ENCODE measurements at regions of chr2 and their contacts with region 1.

Region 1: DNA sequence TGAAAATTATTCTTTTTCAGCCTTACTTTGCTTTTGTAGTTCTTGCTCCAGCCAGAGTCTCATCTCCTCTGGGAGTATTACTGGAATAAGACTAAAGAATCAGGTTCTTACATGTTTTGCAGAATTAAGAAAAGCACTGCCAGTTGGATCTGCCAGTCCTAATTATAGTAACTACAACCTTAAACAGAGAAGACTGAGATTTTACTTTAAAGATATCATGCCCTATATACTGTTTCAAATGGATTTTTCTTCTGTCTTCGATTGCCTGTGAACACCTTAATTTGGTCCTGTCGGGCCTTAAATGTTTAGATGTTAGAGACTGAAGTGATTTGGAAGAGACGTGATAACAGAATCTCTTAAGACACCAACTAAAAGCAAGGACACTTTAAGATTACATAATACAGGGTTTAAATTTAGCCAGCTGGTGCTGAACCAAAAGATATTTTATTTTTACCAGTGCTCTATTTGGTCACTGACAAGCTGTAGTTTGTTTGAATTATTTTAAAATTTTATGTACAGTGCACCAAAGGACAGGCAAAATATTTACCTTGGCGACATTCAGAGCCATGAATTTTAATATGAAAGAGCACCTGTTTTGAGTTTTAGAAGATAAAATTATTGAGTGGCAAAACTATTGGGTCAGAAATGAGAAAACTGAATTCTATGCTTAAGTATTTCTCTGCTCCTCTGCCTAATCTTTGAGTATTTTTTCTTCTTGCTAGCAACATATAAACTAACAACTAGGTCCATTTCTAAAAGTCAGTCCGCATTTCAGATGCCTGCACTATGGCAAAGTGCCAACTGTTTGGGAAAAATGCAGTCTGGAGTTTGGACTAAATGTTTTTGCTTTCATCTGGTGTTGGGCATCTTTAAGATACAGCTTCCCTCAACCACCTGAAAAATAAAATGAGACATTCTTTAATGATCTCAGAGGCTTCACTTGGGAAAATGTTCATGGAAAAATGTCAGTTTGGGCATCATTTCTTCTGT is 300.0 kb downstream of the XIRP2 start:
- DNase-seq: no peak
- ATAC-seq: peak; percentile 66

Region 2: GRCh38 chr2:167140767-167141166 is 47.5 kb before region 1 on chr2:
- intact Hi-C with region 1: loop called (anchors 5 kb)
- DNase-seq: no peak
- ATAC-seq: peak; percentile 86

Region 3: DNA sequence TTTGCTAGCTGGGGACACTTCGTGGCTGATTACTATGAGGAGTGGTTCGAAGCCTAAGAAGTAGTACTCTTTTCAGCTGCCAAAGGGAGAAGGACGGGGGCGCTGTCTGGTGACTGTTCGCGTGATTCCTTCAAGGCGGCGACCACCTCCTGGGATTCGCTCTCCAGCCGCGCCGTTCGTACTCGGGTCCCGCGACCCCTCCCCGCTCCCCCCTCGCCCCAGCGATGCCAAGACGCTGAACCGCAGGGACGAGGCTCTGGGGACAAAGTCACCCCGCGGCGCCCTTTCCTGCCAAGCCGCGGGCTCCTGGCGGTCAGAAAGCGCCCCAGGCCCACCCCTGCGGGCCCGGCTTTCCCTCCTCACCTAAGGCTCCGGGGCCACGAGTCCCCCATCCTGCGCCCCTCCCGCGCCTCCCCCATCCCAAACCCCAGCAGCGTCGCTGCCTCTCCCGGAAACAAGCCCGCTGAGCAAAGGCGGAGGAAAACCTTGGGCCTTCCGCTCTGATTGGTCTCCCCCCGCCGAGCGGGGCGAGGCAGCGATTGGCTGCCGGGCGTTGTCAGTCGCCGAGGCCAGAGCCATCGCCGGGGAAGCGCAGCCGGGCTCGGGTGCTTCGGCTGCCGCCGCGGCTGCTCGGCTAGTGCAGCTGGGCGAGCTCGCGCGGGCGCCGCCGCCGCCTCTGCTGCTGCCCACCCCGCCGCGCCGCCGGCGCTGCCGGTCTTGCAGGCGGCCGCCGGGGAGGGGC is 104.3 kb after region 1 on chr2:
- intact Hi-C with region 1: no loop called
- DNase-seq: peak; percentile 91
- ATAC-seq: peak; percentile 99

Region 4: GRCh38 chr2:167431949-167432348 is 243.7 kb after region 1 on chr2:
- intact Hi-C with region 1: no loop called
- DNase-seq: no peak
- ATAC-seq: no peak